ENCODE measurements at regions of chr3 and their contacts with region 1.

Region 1: GRCh38 chr3:13091898-13092611 is 18.8 kb upstream of the IQSEC1 start:
- DNase-seq: peak; percentile 80 to 83
- ATAC-seq: peak; percentile 79 to 94
- H3K4me3 ChIP-seq: no peak overlapping the region
- H3K27ac ChIP-seq: no peak overlapping the region
- H3K4me1 ChIP-seq: no peaks in the 10 kb centered on the region
- CTCF ChIP-seq: peak; percentile 85
- EP300 ChIP-seq: no peak
- POLR2A ChIP-seq: no peak
- RAD21 ChIP-seq: peak; percentile 89 to 92

Region 2: GRCh38 chr3:12782172-12782815 is 309.8 kb before region 1 on chr3:
- CTCF ChIA-PET with region 1: no interaction called
- POLR2A ChIA-PET with region 1: no interaction called
- DNase-seq: peak in 1 of 2 experiments; percentile 65
- ATAC-seq: peak; percentile 30 to 55; a peak in 2 of 6 replicates
- H3K4me3 ChIP-seq: no peak overlapping the region
- H3K27ac ChIP-seq: no peak overlapping the region
- H3K4me1 ChIP-seq: no peaks in the 10 kb centered on the region
- CTCF ChIP-seq: no peak
- EP300 ChIP-seq: no peak
- POLR2A ChIP-seq: no peak
- RAD21 ChIP-seq: no peak

Region 3: DNA sequence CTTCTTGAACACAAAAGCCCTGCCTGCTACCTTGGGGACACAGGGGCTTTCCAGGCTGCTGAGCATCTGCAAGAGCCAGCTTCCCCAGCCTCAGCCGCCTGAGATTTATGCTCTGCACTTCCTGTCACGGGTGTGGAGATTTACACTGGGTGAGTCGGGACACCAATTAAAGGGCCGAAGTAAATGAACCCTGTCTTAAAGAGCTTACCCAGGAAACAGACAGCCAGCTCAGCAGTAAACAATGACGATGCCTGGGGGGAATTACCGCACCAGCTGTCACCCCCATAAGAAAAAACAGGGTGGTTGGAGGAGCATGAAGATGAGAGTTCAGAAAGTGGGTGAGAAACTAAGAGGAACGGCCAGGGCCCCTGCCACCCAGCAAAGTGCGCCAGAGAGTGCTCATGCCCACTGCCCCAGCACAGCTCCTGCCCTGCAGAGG is 18.6 kb after region 1 on chr3:
- CTCF ChIA-PET with region 1: interaction called, 62 read pairs
- POLR2A ChIA-PET with region 1: no interaction called
- DNase-seq: no peak
- ATAC-seq: no peak
- H3K4me3 ChIP-seq: no peak overlapping the region
- H3K27ac ChIP-seq: peak overlapping the region in 1 of 2 experiments; percentile 34; a peak in 2 of 6 replicates
- H3K4me1 ChIP-seq: peaks cover 27% of the 10 kb centered on the region
- CTCF ChIP-seq: no peak
- EP300 ChIP-seq: no peak
- POLR2A ChIP-seq: no peak
- RAD21 ChIP-seq: no peak

Region 4: DNA sequence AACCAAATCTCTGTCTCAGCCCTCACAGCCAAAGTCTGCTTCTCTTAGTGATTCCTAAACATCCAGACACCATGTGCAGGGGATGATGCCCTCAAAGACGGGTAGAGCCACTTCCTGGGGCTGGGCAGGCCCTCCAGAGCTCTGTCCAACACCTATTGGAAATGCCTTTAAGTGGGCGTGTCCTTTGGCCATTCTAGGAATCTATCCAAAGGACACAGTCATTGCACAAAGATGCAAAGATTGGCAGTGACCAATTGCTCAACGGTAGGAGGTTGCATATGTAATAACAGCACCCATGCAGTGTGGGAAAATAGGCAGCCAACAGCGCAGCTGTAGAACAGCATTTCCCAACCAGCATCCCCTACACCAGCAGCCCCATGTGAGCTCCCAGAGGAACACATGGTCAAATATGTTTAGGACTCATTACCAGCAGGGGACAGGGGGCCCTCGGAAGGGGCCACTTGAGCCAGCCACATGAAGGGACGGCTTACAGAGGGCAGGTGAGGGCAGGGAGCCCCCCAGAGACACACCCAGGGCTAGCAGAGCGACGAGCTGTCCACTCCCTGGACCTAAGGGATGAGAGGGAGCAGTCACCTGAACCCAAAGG is 124.0 kb after region 1 on chr3:
- CTCF ChIA-PET with region 1: interaction called, 12 read pairs
- POLR2A ChIA-PET with region 1: no interaction called
- DNase-seq: peak; percentile 49 to 68
- ATAC-seq: peak; percentile 53 to 64
- H3K4me3 ChIP-seq: no peak overlapping the region
- H3K27ac ChIP-seq: peak overlapping the region; percentile 18 to 66; a peak in 4 of 6 replicates
- H3K4me1 ChIP-seq: peaks cover 41% of the 10 kb centered on the region
- CTCF ChIP-seq: no peak
- EP300 ChIP-seq: no peak
- POLR2A ChIP-seq: no peak
- RAD21 ChIP-seq: no peak

Region 5: GRCh38 chr3:13282986-13283876 is 191.2 kb after region 1 on chr3:
- CTCF ChIA-PET with region 1: interaction called, 36 read pairs
- POLR2A ChIA-PET with region 1: no interaction called
- DNase-seq: peak; percentile 63 to 64
- ATAC-seq: peak; percentile 63 to 74
- H3K4me3 ChIP-seq: peak overlapping the region; percentile 83
- H3K27ac ChIP-seq: peak overlapping the region; percentile 71 to 83
- H3K4me1 ChIP-seq: peaks cover 6% of the 10 kb centered on the region; the same call in 1 of the 3 replicates
- CTCF ChIP-seq: peak; percentile 32; the same call in 2 of the 3 replicates
- EP300 ChIP-seq: no peak
- POLR2A ChIP-seq: no peak
- RAD21 ChIP-seq: peak; percentile 27 to 38; a peak in 3 of 5 replicates

Region 6: GRCh38 chr3:13440204-13440817 is 348.3 kb after region 1 on chr3:
- CTCF ChIA-PET with region 1: interaction called, 10 read pairs
- POLR2A ChIA-PET with region 1: no interaction called
- DNase-seq: no peak
- ATAC-seq: 0 out of 6 replicates have a peak, but pooled peaks of 1 of the 2 experiments have one; percentile 34
- H3K4me3 ChIP-seq: no peak overlapping the region
- H3K27ac ChIP-seq: no peak overlapping the region
- H3K4me1 ChIP-seq: no peaks in the 10 kb centered on the region
- CTCF ChIP-seq: no peak
- EP300 ChIP-seq: no peak
- POLR2A ChIP-seq: no peak
- RAD21 ChIP-seq: no peak

Region 7: GRCh38 chr3:13461169-13462158 is 369.4 kb after region 1 on chr3:
- CTCF ChIA-PET with region 1: interaction called, 127 read pairs
- POLR2A ChIA-PET with region 1: no interaction called
- DNase-seq: peak; percentile 58 to 84
- ATAC-seq: peak; percentile 74 to 96
- H3K4me3 ChIP-seq: no peak overlapping the region
- H3K27ac ChIP-seq: no peak overlapping the region
- H3K4me1 ChIP-seq: no peaks in the 10 kb centered on the region
- CTCF ChIP-seq: peak; percentile 55
- EP300 ChIP-seq: no peak
- POLR2A ChIP-seq: no peak
- RAD21 ChIP-seq: peak; percentile 26 to 52; a peak in 3 of 5 replicates

Region 8: GRCh38 chr3:13657660-13658435 is 565.8 kb after region 1 on chr3:
- CTCF ChIA-PET with region 1: interaction called, 14 read pairs
- POLR2A ChIA-PET with region 1: no interaction called
- DNase-seq: peak; percentile 45 to 95
- ATAC-seq: peak; percentile 82 to 94
- H3K4me3 ChIP-seq: no peak overlapping the region
- H3K27ac ChIP-seq: no peak overlapping the region
- H3K4me1 ChIP-seq: peaks cover 4% of the 10 kb centered on the region; the same call in 1 of the 3 replicates
- CTCF ChIP-seq: peak; percentile 70
- EP300 ChIP-seq: no peak
- POLR2A ChIP-seq: no peak
- RAD21 ChIP-seq: peak; percentile 79 to 87